A673 (cell line): ENCODE measurements at regions of chr17 and their contacts with region 1.

Region 1: DNA sequence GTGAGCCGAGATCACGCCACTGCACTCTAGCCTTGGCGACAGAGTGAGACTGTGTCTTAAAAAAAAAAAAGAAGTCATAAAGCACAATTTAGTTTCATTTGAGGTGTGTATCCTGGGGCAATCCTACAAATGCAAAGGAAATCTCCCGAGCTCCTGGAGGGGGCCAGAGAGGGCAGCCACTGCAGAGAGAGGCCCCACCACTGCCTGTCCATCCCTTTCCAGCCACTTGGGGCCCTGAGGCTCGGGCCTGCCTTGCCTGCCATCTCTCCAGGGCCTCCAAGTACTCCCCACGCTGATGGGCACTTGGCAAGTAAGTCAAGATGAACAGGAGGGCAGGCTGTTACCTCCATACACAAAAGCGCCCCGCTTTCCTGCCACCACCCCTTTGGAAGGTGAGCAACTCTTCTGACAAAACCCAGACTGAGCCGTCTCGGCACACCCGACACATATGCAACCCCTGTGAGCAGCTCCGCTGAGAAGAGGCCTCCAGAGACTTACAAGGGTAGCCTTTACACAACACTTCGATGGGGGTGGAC is 21.5 kb downstream of the CSNK1D start:
- DNase-seq: no peak
- H3K4me3 ChIP-seq: no peak overlapping the region
- H3K27ac ChIP-seq: no peak overlapping the region
- H3K4me1 ChIP-seq: peaks cover 26% of the 10 kb centered on the region
- H3K27me3 ChIP-seq: no peaks in the 10 kb centered on the region
- CTCF ChIP-seq: no peak

Region 2: GRCh38 chr17:80694992-80695912 is 1556.8 kb before region 1 on chr17:
- CTCF ChIA-PET with region 1: no interaction called
- POLR2A ChIA-PET with region 1: no interaction called
- intact Hi-C with region 1: no loop called
- DNase-seq: no peak
- H3K4me3 ChIP-seq: no peak overlapping the region
- H3K27ac ChIP-seq: no peak overlapping the region
- H3K4me1 ChIP-seq: no peaks in the 10 kb centered on the region
- H3K27me3 ChIP-seq: no peaks in the 10 kb centered on the region
- CTCF ChIP-seq: no peak

Region 3: GRCh38 chr17:82269138-82269881 is 17.3 kb after region 1 on chr17:
- CTCF ChIA-PET with region 1: no interaction called
- POLR2A ChIA-PET with region 1: interaction called, 12 read pairs
- intact Hi-C with region 1: no loop called
- DNase-seq: no peak
- H3K4me3 ChIP-seq: no peak overlapping the region
- H3K27ac ChIP-seq: no peak overlapping the region
- H3K4me1 ChIP-seq: peaks cover 10% of the 10 kb centered on the region
- H3K27me3 ChIP-seq: no peaks in the 10 kb centered on the region
- CTCF ChIP-seq: no peak